ENCODE measurements at regions of chr2 and their contacts with region 1.

Region 1: GRCh38 chr2:65300761-65301711 is 73.4 kb downstream of the ACTR2 start:
- DNase-seq: peak in 3 of 5 donors; percentile 25 to 56 (median 53)
- H3K4me3 ChIP-seq: no peak overlapping the region
- H3K27ac ChIP-seq: peak overlapping the region in 1 of 2 donors; percentile 47
- H3K4me1 ChIP-seq: peaks cover 13% of the 10 kb centered on the region
- H3K27me3 ChIP-seq: no peaks in the 10 kb centered on the region
- CTCF ChIP-seq: no peak
- EP300 ChIP-seq: no peak
- POLR2A ChIP-seq: no peak

Region 2: GRCh38 chr2:65432227-65433190 is 131.5 kb after region 1 on chr2 and contains the start of gene SPRED2:
- intact Hi-C with region 1: loop called in 1 of 4 experiments (anchors 10 kb)
- DNase-seq: peak; percentile 93 to 97 (median 94)
- H3K4me3 ChIP-seq: peak within 1 kb of the TSS; percentile 93
- H3K27ac ChIP-seq: peak within 1 kb of the TSS; percentile 89 to 91
- H3K4me1 ChIP-seq: peaks cover 4% of the 10 kb centered on the region
- H3K27me3 ChIP-seq: no peaks in the 10 kb centered on the region
- CTCF ChIP-seq: peak in 2 of 3 donors; percentile 14 to 17
- EP300 ChIP-seq: no peak
- POLR2A ChIP-seq: peak; percentile 81
- total RNA-seq, gene SPRED2: 13.1 to 32.9 (median 17.6) TPM

Region 3: DNA sequence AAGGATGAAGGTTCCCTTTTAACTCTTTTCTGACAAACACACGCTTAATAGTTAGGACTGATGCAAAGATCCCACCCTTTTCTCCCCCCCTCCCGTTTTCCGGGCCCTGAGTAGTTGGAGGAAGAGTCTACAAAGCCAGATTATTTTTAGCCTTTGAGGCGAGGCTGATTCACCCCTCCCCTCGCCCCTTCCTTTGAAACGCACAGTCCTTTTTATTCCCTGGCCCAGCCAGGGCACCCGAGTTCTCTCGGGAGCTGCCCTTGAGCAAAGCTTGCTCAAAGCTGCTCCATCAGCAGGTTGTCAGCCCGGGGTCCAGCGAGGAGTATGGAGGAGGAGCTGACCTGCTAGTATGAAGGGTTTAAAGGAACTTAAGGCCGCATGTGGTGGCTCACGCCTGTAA is 178.5 kb after region 1 on chr2:
- intact Hi-C with region 1: no loop called
- DNase-seq: no peak
- H3K4me3 ChIP-seq: no peak overlapping the region
- H3K27ac ChIP-seq: no peak overlapping the region
- H3K4me1 ChIP-seq: no peaks in the 10 kb centered on the region
- H3K27me3 ChIP-seq: no peaks in the 10 kb centered on the region
- CTCF ChIP-seq: no peak
- EP300 ChIP-seq: no peak
- POLR2A ChIP-seq: no peak

Measured in ovary (tissue), 10 donors.